Activated naive CD4-positive, alpha-beta T cell treated with anti-CD3 and anti-CD28 coated beads for 36 hours (primary cell): ENCODE measurements at regions of chr11 and their contacts with region 1.

Region 1: GRCh38 chr11:57588046-57588710 is 9.3 kb upstream of the SERPING1 start:
- DNase-seq: no peak
- H3K4me3 Mint-ChIP-seq: no peak overlapping the region
- H3K27ac Mint-ChIP-seq: no peak overlapping the region
- H3K4me1 Mint-ChIP-seq: no peaks in the 10 kb centered on the region
- H3K27me3 Mint-ChIP-seq: no peaks in the 10 kb centered on the region

Region 2: GRCh38 chr11:56103210-56103737 is 1484.9 kb before region 1 on chr11 and contains the start of gene OR8H2:
- CTCF ChIA-PET with region 1: no interaction called
- intact Hi-C with region 1: no loop called
- DNase-seq: no peak
- H3K4me3 Mint-ChIP-seq: no peak within 1 kb of the TSS
- H3K27ac Mint-ChIP-seq: no peak within 1 kb of the TSS
- H3K4me1 Mint-ChIP-seq: no peaks in the 10 kb centered on the region
- H3K27me3 Mint-ChIP-seq: no peaks in the 10 kb centered on the region
- total RNA-seq, gene OR8H2: not detected

Region 3: GRCh38 chr11:56764976-56765375 is 823.2 kb before region 1 on chr11:
- CTCF ChIA-PET with region 1: no interaction called
- intact Hi-C with region 1: loop called (anchors 10 kb)
- DNase-seq: no peak
- H3K4me3 Mint-ChIP-seq: no peak overlapping the region
- H3K27ac Mint-ChIP-seq: no peak overlapping the region
- H3K4me1 Mint-ChIP-seq: no peaks in the 10 kb centered on the region
- H3K27me3 Mint-ChIP-seq: no peaks in the 10 kb centered on the region

Region 4: DNA sequence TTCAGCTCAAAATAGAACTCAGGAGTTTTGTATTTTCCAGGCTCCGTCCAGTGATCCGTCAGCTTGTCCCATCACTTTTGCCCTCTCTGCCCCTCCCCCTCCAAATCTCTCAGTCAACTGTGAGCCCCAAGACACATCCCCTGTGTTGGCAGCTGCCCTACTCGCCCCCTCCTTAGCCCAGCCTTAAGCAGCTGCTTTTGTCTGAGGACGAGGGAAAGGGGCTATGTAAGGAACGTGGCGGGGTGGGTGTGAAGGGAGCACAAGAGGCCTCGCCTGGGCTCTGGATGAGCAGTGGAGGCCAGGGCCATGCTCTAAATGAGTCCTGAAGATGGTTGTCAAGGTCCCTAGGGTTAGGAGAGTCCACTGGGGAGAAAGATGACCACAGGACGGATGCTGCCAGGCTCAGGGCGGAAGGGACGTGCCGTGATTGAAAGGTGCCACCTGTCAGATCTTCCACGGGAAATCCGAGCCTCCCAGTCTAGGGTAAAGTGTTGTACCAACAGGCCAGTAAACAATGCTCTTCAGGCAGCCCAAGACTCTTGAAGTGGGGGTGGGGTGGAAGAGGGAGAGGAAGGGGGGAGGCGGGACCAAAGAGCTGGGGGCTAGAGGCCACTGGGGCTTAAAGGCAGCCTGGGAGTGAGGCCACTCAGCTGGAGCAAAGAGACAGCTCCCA is 51.1 kb before region 1 on chr11 and contains the start of gene SMTNL1:
- CTCF ChIA-PET with region 1: no interaction called
- intact Hi-C with region 1: no loop called
- DNase-seq: no peak
- H3K4me3 Mint-ChIP-seq: no peak within 1 kb of the TSS
- H3K27ac Mint-ChIP-seq: no peak within 1 kb of the TSS
- H3K4me1 Mint-ChIP-seq: peaks cover under 1% of the 10 kb centered on the region
- H3K27me3 Mint-ChIP-seq: no peaks in the 10 kb centered on the region
- total RNA-seq, gene SMTNL1: not detected

Region 5: GRCh38 chr11:57649826-57650738 is 61.9 kb after region 1 on chr11 and contains the start of gene YPEL4:
- CTCF ChIA-PET with region 1: no interaction called
- intact Hi-C with region 1: no loop called
- DNase-seq: peak; percentile 70
- H3K4me3 Mint-ChIP-seq: peak within 1 kb of the TSS; percentile 75
- H3K27ac Mint-ChIP-seq: no peak within 1 kb of the TSS
- H3K4me1 Mint-ChIP-seq: peaks cover 38% of the 10 kb centered on the region
- H3K27me3 Mint-ChIP-seq: peaks cover 37% of the 10 kb centered on the region
- total RNA-seq, gene YPEL4: 0.17 to 0.54 TPM